ENCODE measurements at regions of chr22 and their contacts with region 1.

Region 1: GRCh38 chr22:23128269-23129108 is 13.3 kb downstream of the RSPH14 start:
- DNase-seq: peak; percentile 90
- H3K4me3 ChIP-seq: no peak overlapping the region; a peak in 1 of 4 replicates
- H3K27ac ChIP-seq: no peak overlapping the region; a peak in 1 of 4 replicates
- H3K4me1 ChIP-seq: peaks cover 0 to 22% of the 10 kb centered on the region in 2 experiments; a peak in 1 of 4 replicates
- H3K27me3 ChIP-seq: no peaks in the 10 kb centered on the region
- CTCF ChIP-seq: peak; percentile 86
- EP300 ChIP-seq: peak in 1 of 2 experiments; percentile 61; a peak in 1 of 4 replicates
- RAD21 ChIP-seq: peak; percentile 97

Region 2: GRCh38 chr22:22976033-22976922 is 152.2 kb before region 1 on chr22:
- CTCF ChIA-PET with region 1: interaction called, 51 read pairs
- POLR2A ChIA-PET with region 1: no interaction called
- DNase-seq: peak; percentile 36
- H3K4me3 ChIP-seq: no peak overlapping the region
- H3K27ac ChIP-seq: peak overlapping the region in 1 of 2 experiments; percentile 39; a peak in 2 of 4 replicates
- H3K4me1 ChIP-seq: peaks cover 0 to 16% of the 10 kb centered on the region in 2 experiments; a peak in 1 of 4 replicates
- H3K27me3 ChIP-seq: no peaks in the 10 kb centered on the region
- CTCF ChIP-seq: no peak
- EP300 ChIP-seq: peak in 1 of 2 experiments; percentile 86; a peak in 2 of 4 replicates
- RAD21 ChIP-seq: peak; percentile 63

Region 3: DNA sequence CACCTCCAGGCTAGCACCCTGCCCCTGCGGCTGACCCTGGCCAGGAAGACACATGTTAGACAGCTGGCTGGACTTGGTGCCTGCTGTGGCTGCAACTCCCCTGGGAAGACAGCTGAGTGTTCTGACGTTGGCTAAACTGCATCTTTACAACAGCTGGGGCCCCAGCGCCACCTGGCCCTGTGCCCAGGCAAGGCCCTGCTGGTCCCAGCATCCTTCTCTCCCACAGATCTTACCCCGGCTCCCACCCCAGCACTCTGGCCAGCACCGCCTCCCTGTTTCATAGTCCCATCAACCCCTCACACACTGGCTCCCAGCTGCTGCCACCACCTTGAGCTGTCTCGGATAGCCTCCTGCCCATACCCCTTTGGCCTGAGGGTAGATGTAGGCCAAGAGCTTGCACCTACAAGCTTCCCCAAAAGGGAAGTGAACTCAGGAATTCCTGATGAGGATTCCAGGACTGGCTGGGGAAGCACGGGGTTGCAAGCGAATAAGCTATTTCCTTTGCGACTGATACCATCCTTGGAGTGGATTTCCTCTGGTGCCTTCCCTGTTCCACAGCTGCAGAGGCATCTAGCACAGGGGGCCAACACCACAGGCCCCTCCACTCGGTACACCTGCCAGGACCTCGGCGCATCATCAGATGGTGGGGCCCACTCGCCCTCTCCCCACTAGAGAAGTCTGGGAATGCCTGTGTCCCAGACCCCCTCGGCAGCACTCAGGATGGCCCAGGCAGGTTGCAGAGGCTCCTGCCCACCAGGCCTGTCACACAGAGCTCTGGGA is 15.2 kb before region 1 on chr22:
- CTCF ChIA-PET with region 1: interaction called, 28 read pairs
- POLR2A ChIA-PET with region 1: interaction called, 3 read pairs
- DNase-seq: peak; percentile 84
- H3K4me3 ChIP-seq: no peak overlapping the region
- H3K27ac ChIP-seq: peak overlapping the region in 1 of 2 experiments; percentile 86; a peak in 2 of 4 replicates
- H3K4me1 ChIP-seq: peaks cover 0 to 98% of the 10 kb centered on the region in 2 experiments; a peak in 1 of 4 replicates
- H3K27me3 ChIP-seq: no peaks in the 10 kb centered on the region
- CTCF ChIP-seq: no peak
- EP300 ChIP-seq: no peak
- RAD21 ChIP-seq: no peak

Region 4: GRCh38 chr22:23144932-23145873 is 16.7 kb after region 1 on chr22 and contains the start of gene RAB36:
- CTCF ChIA-PET with region 1: interaction called, 13 read pairs
- POLR2A ChIA-PET with region 1: interaction called, 3 read pairs
- DNase-seq: peak; percentile 98
- H3K4me3 ChIP-seq: peak within 1 kb of the TSS; percentile 73 to 79
- H3K27ac ChIP-seq: peak within 1 kb of the TSS; percentile 62 to 73
- H3K4me1 ChIP-seq: peaks cover 6 to 17% of the 10 kb centered on the region in 2 experiments; a peak in 1 of 4 replicates
- H3K27me3 ChIP-seq: no peaks in the 10 kb centered on the region
- CTCF ChIP-seq: no peak
- EP300 ChIP-seq: no peak
- RAD21 ChIP-seq: no peak
- polyA plus RNA-seq, gene RAB36: 6.6 and 6.8 TPM in 2 replicates